Activated T-helper 2 cell treated with anti-CD3 and anti-CD28 coated beads, Interferon-gamma antibody, Interleukin-2, Interleukin-4, amounts not matched to agents 10 μg/mL and 5 μg/mL and 100 μg/mL, durations not matched to agents 14 hours and 24 hours and 36 hours (primary cell): ENCODE measurements at regions of chr12 and their contacts with region 1.

Region 1: GRCh38 chr12:93979189-93979588 is 169.2 kb upstream of the PLXNC1 start:
- DNase-seq: peak; percentile 13
- H3K4me3 Mint-ChIP-seq: no peak overlapping the region
- H3K27ac Mint-ChIP-seq: no peak overlapping the region
- H3K4me1 Mint-ChIP-seq: peaks cover 34% of the 10 kb centered on the region
- H3K27me3 Mint-ChIP-seq: peaks cover 8% of the 10 kb centered on the region

Region 2: DNA sequence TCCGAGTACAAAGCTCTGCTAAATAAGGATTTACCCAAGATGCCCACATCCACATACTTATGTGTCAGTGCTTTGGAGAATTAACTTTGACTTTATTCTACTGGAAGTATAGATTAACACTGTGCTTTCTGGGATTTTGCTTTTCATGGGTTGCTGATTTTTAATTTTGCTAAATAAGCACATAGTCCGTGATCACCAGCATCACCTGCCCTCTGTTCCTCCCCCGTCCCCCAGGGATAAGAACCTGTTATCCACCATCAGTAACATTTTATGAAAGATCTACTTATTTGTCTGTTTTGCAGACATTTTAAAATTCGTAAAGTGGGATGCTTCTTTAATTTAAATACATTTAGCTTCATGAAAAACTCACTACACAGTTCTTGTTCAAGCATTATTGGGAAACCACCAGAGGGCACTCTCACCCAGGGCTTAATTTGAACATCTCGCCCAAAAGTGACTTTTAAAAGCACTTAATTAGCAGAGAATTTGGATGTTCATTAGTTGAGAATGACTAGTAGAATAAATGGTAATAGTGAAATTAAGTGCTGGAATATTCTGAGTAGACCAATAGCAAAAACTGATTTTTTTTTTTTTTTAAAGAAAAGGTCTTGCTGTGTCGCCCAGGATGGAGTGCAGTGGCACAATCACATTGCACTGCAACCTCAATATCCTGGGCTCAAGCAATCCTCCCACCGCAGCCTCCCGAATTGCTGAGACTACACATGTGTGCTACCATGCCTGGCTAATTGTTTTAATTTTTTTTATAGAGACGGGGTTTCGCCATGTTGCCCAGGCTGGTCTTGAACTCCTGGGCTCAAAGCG is 476.2 kb before region 1 on chr12:
- intact Hi-C with region 1: loop called (anchors 5 kb)
- DNase-seq: peak; percentile 26
- H3K4me3 Mint-ChIP-seq: no peak overlapping the region
- H3K27ac Mint-ChIP-seq: no peak overlapping the region
- H3K4me1 Mint-ChIP-seq: peaks cover 15% of the 10 kb centered on the region
- H3K27me3 Mint-ChIP-seq: no peaks in the 10 kb centered on the region

Region 3: DNA sequence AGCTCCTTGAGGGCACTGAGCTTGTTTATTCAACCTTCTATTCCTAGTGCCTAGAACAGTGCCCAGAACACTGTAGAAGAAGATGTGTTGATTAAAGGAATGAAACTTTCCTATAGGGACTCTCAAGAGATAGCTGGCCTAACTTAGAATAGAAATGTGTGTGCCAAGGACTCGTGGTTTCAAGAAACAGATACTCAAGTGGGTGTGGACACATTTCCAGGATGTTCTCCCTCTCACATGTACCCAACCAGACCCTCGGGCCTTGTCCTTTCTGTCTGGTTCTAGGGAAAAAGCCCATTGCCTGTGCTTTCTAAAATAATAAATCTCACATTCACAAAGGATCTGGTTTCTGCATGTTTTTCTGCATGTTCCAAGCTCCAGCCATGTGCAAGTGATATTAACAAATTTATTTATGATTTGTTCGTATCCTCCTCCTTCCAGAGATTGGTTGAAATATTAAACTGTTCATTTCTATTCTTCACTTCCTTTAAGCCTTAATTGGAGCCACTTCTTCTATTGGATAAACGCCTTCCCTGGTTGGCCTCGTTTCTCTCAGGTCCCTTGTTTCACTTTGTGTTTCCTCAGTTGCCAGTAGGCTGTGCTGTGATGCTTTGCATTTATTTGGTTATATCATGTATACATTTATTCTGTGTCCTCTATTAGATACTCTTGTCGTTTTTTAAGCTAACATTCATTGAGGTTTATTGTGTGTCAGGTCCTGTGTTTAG is 212.2 kb before region 1 on chr12:
- intact Hi-C with region 1: loop called (anchors 1 kb)
- DNase-seq: peak; percentile 28
- H3K4me3 Mint-ChIP-seq: no peak overlapping the region
- H3K27ac Mint-ChIP-seq: no peak overlapping the region
- H3K4me1 Mint-ChIP-seq: peaks cover 32% of the 10 kb centered on the region
- H3K27me3 Mint-ChIP-seq: peaks cover 7% of the 10 kb centered on the region